MCF 10A (cell line): ENCODE measurements at regions of chr17 and their contacts with region 1.

Region 1: GRCh38 chr17:47895856-47896671 is at the start of gene SP2:
- DNase-seq: peak; percentile 100
- H3K4me3 Mint-ChIP-seq: peak within 1 kb of the TSS; percentile 97
- H3K27ac Mint-ChIP-seq: peak within 1 kb of the TSS; percentile 100
- H3K4me1 Mint-ChIP-seq: peaks cover 26% of the 10 kb centered on the region
- H3K27me3 Mint-ChIP-seq: no peaks in the 10 kb centered on the region
- CTCF ChIP-seq: no peak
- total RNA-seq, gene SP2: 11.9 and 15.1 TPM in 2 replicates

Region 2: DNA sequence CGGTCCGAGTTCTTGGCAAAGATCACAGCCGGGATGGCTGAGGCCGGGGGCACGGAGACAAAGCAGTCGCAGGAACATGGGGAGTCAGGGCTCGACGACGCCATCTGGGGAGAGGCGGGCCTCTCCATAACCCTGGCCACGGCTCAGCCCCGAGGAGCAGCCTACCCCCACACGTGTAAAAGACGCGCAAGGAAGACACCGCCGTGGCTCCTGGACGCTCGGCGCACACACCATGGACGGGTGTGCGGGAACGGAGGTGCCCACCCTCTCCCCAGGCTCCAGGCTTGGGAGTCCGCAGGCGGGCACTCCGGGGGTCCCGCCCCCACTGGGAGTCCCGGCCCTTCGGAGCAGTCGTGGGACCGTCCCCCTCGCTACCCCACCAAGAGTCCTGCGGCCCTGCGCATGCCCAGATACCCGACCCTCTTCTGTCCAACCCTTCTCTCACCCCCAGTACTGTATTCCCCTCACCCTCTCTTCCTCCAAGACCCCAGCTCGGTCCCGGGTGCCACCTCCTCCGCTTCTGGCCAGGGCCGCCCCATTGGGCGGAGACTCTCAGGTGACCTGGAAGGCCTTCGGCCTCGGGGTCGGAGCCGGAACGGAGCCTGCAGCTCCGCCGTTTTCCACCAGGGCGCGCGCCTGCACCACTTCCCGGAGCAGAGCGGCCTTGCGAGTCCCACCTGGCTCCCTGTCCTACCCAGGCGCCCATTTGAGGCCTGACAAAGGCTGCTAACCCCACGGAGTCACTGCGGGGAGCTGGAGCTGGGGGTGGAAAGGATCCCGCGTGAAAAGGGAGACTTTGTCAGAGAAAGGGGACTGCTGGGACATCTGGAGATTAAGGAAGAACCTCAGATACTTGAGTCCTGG is 55.1 kb before region 1 on chr17 and contains the start of gene SCRN2:
- CTCF ChIA-PET with region 1: interaction called, 523 read pairs
- POLR2A ChIA-PET with region 1: interaction called, 178 read pairs
- intact Hi-C with region 1: no loop called
- DNase-seq: peak; percentile 88
- H3K4me3 Mint-ChIP-seq: peak within 1 kb of the TSS; percentile 81
- H3K27ac Mint-ChIP-seq: peak within 1 kb of the TSS; percentile 65
- H3K4me1 Mint-ChIP-seq: peaks cover 7% of the 10 kb centered on the region
- H3K27me3 Mint-ChIP-seq: no peaks in the 10 kb centered on the region
- CTCF ChIP-seq: peak; percentile 99
- total RNA-seq, gene SCRN2: 15.7 and 16.2 TPM in 2 replicates

Region 3: GRCh38 chr17:47862621-47863440 is 33.2 kb before region 1 on chr17:
- CTCF ChIA-PET with region 1: interaction called, 5 read pairs
- POLR2A ChIA-PET with region 1: interaction called, 13 read pairs
- intact Hi-C with region 1: no loop called
- DNase-seq: peak; percentile 53
- H3K4me3 Mint-ChIP-seq: no peak overlapping the region
- H3K27ac Mint-ChIP-seq: peak overlapping the region; percentile 4
- H3K4me1 Mint-ChIP-seq: peaks cover 21% of the 10 kb centered on the region
- H3K27me3 Mint-ChIP-seq: no peaks in the 10 kb centered on the region
- CTCF ChIP-seq: no peak

Region 4: DNA sequence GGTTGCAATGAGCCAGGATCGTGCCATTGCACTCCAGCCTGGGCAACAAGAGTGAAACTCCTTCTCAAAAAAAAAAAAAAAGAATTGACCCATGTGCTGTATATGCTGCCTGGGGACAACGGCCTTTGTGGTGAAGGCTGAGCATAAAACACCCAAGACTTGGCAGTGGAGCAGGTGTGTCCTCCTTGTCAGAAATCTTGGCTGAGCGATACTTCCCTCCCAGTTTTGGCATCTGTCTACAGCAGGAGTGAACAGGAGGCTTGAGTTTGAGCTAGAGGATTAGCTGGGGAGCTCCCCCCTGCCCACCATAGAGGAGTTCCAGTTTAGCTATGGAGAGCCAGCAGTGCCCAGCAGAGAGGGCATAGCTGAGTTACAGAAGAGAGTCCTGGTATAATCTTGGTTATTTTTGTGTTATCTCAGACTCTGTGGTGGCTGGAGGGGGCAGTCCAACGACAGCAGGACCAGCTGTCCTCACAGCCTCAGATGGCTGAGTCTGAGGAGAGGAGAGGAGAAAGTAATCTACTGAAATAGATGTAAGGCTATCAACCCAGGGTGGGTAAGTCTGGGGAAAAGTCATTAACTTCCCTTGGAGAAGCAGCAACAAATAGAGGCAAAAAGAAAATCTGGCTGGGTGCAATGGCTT is 18.4 kb after region 1 on chr17:
- CTCF ChIA-PET with region 1: interaction called, 4 read pairs
- POLR2A ChIA-PET with region 1: interaction called, 18 read pairs
- intact Hi-C with region 1: no loop called
- DNase-seq: no peak
- H3K4me3 Mint-ChIP-seq: no peak overlapping the region
- H3K27ac Mint-ChIP-seq: no peak overlapping the region
- H3K4me1 Mint-ChIP-seq: peaks cover 7% of the 10 kb centered on the region
- H3K27me3 Mint-ChIP-seq: no peaks in the 10 kb centered on the region
- CTCF ChIP-seq: no peak

Region 5: GRCh38 chr17:47949136-47949759 is 53.2 kb after region 1 on chr17:
- CTCF ChIA-PET with region 1: interaction called, 17 read pairs
- POLR2A ChIA-PET with region 1: interaction called, 117 read pairs
- intact Hi-C with region 1: no loop called
- DNase-seq: peak; percentile 86
- H3K4me3 Mint-ChIP-seq: peak overlapping the region; percentile 49
- H3K27ac Mint-ChIP-seq: peak overlapping the region; percentile 21
- H3K4me1 Mint-ChIP-seq: peaks cover 14% of the 10 kb centered on the region
- H3K27me3 Mint-ChIP-seq: no peaks in the 10 kb centered on the region
- CTCF ChIP-seq: peak; percentile 86

Region 6: GRCh38 chr17:47970704-47971463 is 74.8 kb after region 1 on chr17 and contains the start of gene CDK5RAP3:
- CTCF ChIA-PET with region 1: interaction called, 7 read pairs
- POLR2A ChIA-PET with region 1: interaction called, 49 read pairs
- intact Hi-C with region 1: loop called (anchors 2 kb)
- DNase-seq: peak; percentile 99
- H3K4me3 Mint-ChIP-seq: peak within 1 kb of the TSS; percentile 94
- H3K27ac Mint-ChIP-seq: peak within 1 kb of the TSS; percentile 88
- H3K4me1 Mint-ChIP-seq: peaks cover 29% of the 10 kb centered on the region
- H3K27me3 Mint-ChIP-seq: no peaks in the 10 kb centered on the region
- CTCF ChIP-seq: peak; percentile 91
- total RNA-seq, gene CDK5RAP3: 132 and 149 TPM in 2 replicates

Region 7: DNA sequence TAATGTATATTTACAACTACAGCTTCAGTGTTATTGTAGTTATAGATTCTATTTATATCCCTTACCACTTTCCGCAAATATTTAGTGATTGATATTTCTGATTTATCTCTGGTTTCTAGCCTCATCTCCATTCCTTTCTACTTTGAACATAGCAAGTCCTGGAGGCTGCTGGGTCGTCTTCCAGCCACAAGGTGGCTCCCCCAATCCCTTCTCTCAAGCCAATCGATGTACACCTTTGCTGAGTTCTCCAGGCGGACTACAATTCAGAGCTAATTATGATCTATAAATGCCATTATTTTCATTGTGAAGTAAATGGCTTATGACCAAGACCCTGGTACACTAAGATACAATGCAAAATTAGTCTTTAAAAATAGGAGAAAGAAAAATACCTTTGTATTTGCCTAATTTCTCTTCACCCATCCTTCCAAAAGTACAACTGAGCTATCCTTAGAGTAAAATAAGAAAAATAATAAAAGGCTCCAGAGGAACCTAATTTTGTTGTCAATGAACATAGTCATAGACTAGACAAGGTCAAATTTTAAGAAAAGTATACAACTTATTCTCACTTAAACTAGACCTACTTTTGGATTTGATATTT is 411.8 kb after region 1 on chr17:
- CTCF ChIA-PET with region 1: no interaction called
- POLR2A ChIA-PET with region 1: no interaction called
- intact Hi-C with region 1: no loop called
- DNase-seq: peak; percentile 58
- H3K4me3 Mint-ChIP-seq: no peak overlapping the region
- H3K27ac Mint-ChIP-seq: no peak overlapping the region
- H3K4me1 Mint-ChIP-seq: no peaks in the 10 kb centered on the region
- H3K27me3 Mint-ChIP-seq: peaks cover 94% of the 10 kb centered on the region
- CTCF ChIP-seq: peak; percentile 74